Psoas muscle (tissue), 8 donors: ENCODE measurements at regions of chr18 and their contacts with region 1.

Region 1: GRCh38 chr18:2395427-2396161 is 175.7 kb downstream of the METTL4 start:
- DNase-seq: no peak
- ATAC-seq: no peak
- H3K4me3 ChIP-seq: no peak overlapping the region
- H3K27ac ChIP-seq: no peak overlapping the region
- H3K4me1 ChIP-seq: no peaks in the 10 kb centered on the region
- H3K27me3 ChIP-seq: no peaks in the 10 kb centered on the region
- CTCF ChIP-seq: no peak

Region 2: DNA sequence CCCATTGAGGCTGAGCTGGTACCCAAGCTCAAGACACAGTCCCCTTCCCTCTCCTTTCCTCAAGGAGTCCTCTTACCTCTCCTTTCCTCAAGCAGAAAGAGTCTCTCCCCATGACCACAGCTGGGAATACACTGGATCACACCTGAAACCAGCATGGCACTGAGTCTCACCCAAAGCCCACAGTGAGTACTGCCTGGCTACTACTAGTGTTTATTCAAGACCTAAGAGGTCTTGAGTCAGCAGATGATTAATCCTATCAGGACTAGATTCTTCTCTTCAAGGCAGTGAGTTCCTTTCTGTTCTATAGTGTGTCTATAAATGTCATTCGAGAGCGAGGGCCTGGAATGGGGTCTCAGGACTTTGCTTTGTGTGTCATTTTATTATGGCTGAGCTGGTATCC is 64.3 kb after region 1 on chr18:
- intact Hi-C with region 1: loop called in 1 of 2 experiments (anchors 10 kb)
- DNase-seq: no peak
- ATAC-seq: no peak
- H3K4me3 ChIP-seq: no peak overlapping the region
- H3K27ac ChIP-seq: no peak overlapping the region
- H3K4me1 ChIP-seq: no peaks in the 10 kb centered on the region
- H3K27me3 ChIP-seq: no peaks in the 10 kb centered on the region
- CTCF ChIP-seq: no peak